ENCODE measurements at regions of chr10 and their contacts with region 1.

Region 1: GRCh38 chr10:101840741-101841453 is 2.7 kb downstream of the KCNIP2 start:
- DNase-seq: peak; percentile 79
- H3K27ac ChIP-seq: no peak overlapping the region
- CTCF ChIP-seq: peak; percentile 91

Region 2: GRCh38 chr10:101856626-101857025 is 15.7 kb after region 1 on chr10:
- CTCF ChIA-PET with region 1: interaction called, 40 read pairs
- POLR2A ChIA-PET with region 1: no interaction called
- DNase-seq: no peak
- H3K27ac ChIP-seq: no peak overlapping the region
- CTCF ChIP-seq: no peak

Region 3: DNA sequence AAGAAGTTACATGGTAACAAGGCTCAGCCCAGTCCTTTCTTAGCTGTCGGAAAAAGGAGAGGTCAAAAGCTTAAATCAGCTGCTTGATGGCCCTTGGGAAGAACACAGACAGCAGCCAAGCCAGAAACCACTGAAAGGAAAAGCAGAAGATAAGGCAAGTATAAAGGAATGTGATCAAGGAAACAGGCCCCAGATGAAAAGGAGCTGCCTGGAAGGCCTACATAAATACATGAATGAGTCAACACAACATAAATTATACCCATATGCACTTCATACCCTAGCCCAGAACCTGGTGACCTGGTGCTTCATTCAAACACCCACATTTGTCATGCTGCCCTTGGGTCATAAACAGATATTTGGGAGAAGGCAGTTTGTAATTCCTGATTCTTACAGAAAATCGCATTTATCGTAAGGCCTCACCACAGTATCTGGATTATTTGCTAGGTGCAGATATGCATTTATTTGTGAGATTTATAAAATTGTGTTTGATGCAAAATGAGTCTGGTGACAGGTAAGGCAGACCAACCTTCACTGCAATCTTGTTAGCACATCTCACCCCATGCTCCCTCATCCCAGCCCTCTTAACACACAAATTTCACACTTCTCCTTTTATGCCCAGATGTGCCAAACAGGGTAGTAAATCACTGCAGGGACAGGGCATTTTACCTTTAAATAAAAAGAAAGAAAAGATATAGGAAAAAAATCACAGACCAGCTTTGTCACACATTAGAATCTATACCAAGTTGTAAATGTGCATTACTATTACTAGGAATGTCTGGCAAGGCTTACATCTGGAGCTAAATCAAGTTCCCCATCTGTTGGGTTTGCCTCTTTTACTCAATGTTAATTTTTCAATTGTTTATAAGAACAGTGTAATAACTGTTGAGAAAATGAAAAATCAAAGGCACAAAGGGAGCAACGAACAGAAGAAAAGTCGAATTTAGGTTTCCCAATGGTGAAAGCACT is 97.7 kb after region 1 on chr10:
- CTCF ChIA-PET with region 1: interaction called, 11 read pairs
- POLR2A ChIA-PET with region 1: no interaction called
- DNase-seq: peak; percentile 79
- H3K27ac ChIP-seq: no peak overlapping the region
- CTCF ChIP-seq: no peak

Region 4: DNA sequence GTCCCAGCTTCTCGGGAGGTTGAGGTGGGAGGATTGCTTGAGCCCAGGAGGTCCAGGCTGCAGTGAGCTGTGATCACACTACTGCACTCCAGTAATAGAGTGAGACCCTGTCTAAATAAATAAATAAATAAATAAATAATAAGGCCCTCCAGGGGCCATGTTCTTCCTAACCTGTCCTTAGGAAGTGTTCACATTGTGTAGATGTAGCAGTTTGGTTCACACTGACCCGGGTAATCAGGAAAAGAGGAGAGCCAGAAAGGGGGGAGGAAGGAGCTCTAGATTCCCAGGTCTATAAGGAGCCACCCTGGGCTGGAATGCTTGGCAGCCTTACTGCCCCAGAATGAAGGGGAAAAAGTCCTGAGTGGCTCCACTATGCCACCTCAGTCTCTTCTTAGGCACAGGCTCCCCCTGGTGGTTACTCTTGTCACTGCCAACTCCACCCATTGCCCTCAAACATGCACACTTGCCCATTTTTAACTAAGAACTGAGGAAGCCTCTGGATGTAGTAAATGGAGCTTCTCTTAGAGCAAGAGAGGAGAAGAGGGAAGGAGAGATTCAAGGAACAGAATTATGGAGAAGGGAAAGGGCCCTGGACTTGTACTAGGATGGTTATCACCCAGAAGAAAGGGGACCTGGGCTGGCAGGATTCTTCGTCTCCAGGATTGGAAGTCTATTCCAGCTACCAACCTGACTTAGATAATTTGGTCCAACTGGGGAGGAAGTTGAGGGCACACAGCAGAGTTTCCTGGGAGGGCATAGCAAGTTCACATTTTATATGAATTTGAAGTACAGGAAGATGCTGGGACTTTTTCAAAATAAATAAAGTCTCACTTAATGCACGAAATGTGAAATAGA is 232.0 kb after region 1 on chr10:
- CTCF ChIA-PET with region 1: interaction called, 19 read pairs
- POLR2A ChIA-PET with region 1: no interaction called
- DNase-seq: peak; percentile 74
- H3K27ac ChIP-seq: peak overlapping the region; percentile 6; the same call in 1 of the 2 replicates
- CTCF ChIP-seq: peak; percentile 92

Measured in RWPE1 (cell line).